ENCODE measurements at regions of chr6 and their contacts with region 1.

Region 1: GRCh38 chr6:145214570-145214969 is 520.8 kb downstream of the EPM2A start:
- DNase-seq: no peak
- ATAC-seq: no peak
- H3K4me3 ChIP-seq: no peak overlapping the region
- H3K27ac ChIP-seq: no peak overlapping the region
- H3K4me1 ChIP-seq: peaks cover 0 to 5% (median 0%) of the 10 kb centered on the region in 9 donors
- H3K27me3 ChIP-seq: no peaks in the 10 kb centered on the region
- CTCF ChIP-seq: peak; percentile 28 to 75 (median 62)

Region 2: GRCh38 chr6:145028144-145028818 is 186.3 kb before region 1 on chr6:
- intact Hi-C with region 1: loop called in 2 of 10 experiments (anchors 10 kb)
- DNase-seq: no peak
- ATAC-seq: peak in 4 of 8 donors; percentile 42 to 57 (median 56)
- H3K4me3 ChIP-seq: no peak overlapping the region
- H3K27ac ChIP-seq: no peak overlapping the region
- H3K4me1 ChIP-seq: peaks cover 0 to under 1% (median 0%) of the 10 kb centered on the region in 9 donors
- H3K27me3 ChIP-seq: no peaks in the 10 kb centered on the region
- CTCF ChIP-seq: peak in 6 of 9 donors; percentile 34 to 64 (median 56)

Region 3: DNA sequence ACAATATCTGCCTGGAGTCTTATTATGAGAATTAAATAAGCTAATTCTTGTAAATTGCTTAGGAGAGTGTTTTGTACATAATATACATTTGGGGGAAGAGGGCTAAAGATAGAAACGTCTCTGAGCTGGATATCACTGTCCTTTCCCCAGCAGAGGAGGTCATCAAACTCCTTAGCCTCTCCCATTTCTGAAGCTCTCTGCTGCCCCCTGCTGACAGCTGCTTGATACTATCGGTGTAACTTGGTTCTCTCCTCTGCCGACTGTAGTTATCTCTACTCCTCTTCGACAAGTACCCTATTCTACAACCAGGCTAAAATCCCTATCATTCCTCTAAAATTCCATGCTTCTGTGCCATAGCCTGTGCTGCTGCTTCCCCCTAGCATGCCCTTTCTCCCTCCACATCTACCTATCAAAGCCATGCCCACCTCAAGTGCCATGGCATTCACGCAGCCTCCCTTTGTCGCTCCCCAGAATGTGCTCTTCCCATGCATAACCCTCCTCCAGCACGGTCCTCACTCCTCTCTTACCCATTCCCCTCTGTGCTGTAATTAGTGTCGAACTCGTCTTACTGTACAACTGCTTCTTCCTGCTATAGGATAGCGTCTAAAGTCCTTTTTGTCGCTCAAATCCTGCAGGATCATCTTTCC is 419.5 kb after region 1 on chr6:
- intact Hi-C with region 1: loop called in 4 of 10 experiments (anchors 10 kb)
- DNase-seq: peak; percentile 83 to 85
- ATAC-seq: peak; percentile 73 to 93 (median 91)
- H3K4me3 ChIP-seq: no peak overlapping the region
- H3K27ac ChIP-seq: no peak overlapping the region
- H3K4me1 ChIP-seq: peaks cover 0 to 20% (median 7%) of the 10 kb centered on the region in 9 donors
- H3K27me3 ChIP-seq: no peaks in the 10 kb centered on the region
- CTCF ChIP-seq: peak; percentile 75 to 93 (median 88)